Mammary epithelial cell (primary cell): ENCODE measurements at regions of chr5 and their contacts with region 1.

Region 1: GRCh38 chr5:38420691-38421390 is 135.6 kb downstream of the LIFR start:
- DNase-seq: peak; percentile 57
- H3K4me3 ChIP-seq: no peak overlapping the region
- H3K27ac ChIP-seq: no peak overlapping the region
- H3K4me1 ChIP-seq: no peaks in the 10 kb centered on the region
- H3K27me3 ChIP-seq: no peaks in the 10 kb centered on the region
- CTCF ChIP-seq: peak; percentile 83 to 91

Region 2: GRCh38 chr5:38556599-38557305 is 135.9 kb after region 1 on chr5 and contains the start of gene LIFR:
- CTCF ChIA-PET with region 1: no interaction called
- dilution Hi-C with region 1: no loop called
- in situ Hi-C with region 1: no loop called
- intact Hi-C with region 1: loop called (anchors 1 kb)
- DNase-seq: peak; percentile 79
- H3K4me3 ChIP-seq: peak within 1 kb of the TSS; percentile 60 to 94 (median 89)
- H3K27ac ChIP-seq: peak within 1 kb of the TSS; percentile 64
- H3K4me1 ChIP-seq: peaks cover 11% of the 10 kb centered on the region
- H3K27me3 ChIP-seq: peaks cover 1% of the 10 kb centered on the region
- CTCF ChIP-seq: no peak
- total RNA-seq, gene LIFR: 4.4 to 26.3 TPM

Region 3: GRCh38 chr5:38816083-38817030 is 395.5 kb after region 1 on chr5:
- CTCF ChIA-PET with region 1: no interaction called
- dilution Hi-C with region 1: no loop called
- in situ Hi-C with region 1: no loop called
- intact Hi-C with region 1: no loop called
- DNase-seq: peak; percentile 94
- H3K4me3 ChIP-seq: no peak overlapping the region
- H3K27ac ChIP-seq: peak overlapping the region; percentile 85
- H3K4me1 ChIP-seq: peaks cover 21% of the 10 kb centered on the region
- H3K27me3 ChIP-seq: no peaks in the 10 kb centered on the region
- CTCF ChIP-seq: no peak

Region 4: DNA sequence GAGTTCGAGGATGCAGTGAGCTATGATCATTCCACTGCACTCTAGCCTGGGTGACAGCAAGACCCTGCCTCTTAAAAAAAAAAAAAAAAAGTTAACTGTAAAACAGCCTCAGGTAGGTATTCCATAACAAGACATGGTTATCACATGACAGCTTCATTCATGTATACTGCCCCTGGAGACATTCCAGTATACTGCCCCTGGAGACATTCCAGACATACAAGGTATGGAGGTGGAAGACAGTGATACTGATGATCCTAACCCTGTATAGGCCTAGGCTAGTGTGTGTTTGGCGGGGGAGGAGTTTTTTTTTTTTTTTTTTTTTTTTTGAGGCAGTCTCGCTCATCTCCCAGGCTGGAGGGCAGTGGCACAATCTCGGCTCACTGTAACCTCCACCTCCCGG is 547.8 kb after region 1 on chr5:
- CTCF ChIA-PET with region 1: interaction called, 20 read pairs
- dilution Hi-C with region 1: no loop called
- in situ Hi-C with region 1: no loop called
- intact Hi-C with region 1: no loop called
- DNase-seq: no peak
- H3K4me3 ChIP-seq: no peak overlapping the region
- H3K27ac ChIP-seq: no peak overlapping the region
- H3K4me1 ChIP-seq: no peaks in the 10 kb centered on the region
- H3K27me3 ChIP-seq: no peaks in the 10 kb centered on the region
- CTCF ChIP-seq: no peak